HepG2 (cell line): ENCODE measurements at regions of chr6 and their contacts with region 1.

Region 1: DNA sequence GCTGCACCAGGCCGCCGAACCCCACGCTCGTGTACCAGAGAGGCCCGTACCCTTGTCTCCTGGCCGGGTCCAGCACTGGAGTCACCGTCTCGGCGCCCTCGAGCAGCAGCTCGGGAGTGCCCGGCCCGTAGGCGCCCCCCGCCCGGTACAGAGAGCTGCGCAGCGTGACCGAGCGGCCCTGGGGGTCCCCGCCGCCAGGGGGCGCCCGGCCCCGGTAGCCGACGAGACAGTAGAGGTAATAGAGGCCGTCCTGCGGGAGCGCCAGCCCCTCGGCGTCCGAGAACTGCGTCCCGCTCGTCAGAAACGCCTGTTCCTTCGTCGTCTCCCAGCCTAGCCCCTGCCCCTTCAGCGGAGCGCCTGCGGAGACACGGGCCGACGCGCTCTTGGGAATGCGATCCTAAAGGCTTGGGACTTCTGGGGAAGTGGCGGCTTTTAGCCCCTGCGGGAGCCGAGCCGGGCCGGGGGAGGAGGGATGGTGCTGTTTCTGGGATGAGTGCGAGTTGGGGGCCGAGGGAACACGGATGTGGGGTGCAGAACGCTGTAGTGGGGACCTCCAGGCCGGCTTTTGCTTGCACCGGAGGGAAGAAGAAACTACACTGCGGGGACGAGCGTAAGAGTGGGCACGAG is 1.3 kb downstream of the LTB start:
- DNase-seq: peak; percentile 61
- ATAC-seq: peak; percentile 94
- H3K4me3 ChIP-seq: peak overlapping the region; percentile 67 to 88 (median 78)
- H3K27ac ChIP-seq: no peak overlapping the region
- H3K4me1 ChIP-seq: peaks cover 25% of the 10 kb centered on the region
- H3K27me3 ChIP-seq: peaks cover 10 to 65% of the 10 kb centered on the region in 2 experiments; a peak in 4 of 5 replicates
- CTCF ChIP-seq: peak; percentile 95
- EP300 ChIP-seq: no peak
- POLR2A ChIP-seq: peak in 1 of 2 experiments; percentile 53; a peak in 1 of 4 replicates
- RAD21 ChIP-seq: peak; percentile 90

Region 2: GRCh38 chr6:30447237-30447636 is 1133.7 kb before region 1 on chr6:
- CTCF ChIA-PET with region 1: no interaction called
- POLR2A ChIA-PET with region 1: no interaction called
- in situ Hi-C with region 1: no loop called
- intact Hi-C with region 1: loop called (anchors 5 kb)
- DNase-seq: peak; percentile 47
- ATAC-seq: peak; percentile 79
- H3K4me3 ChIP-seq: no peak overlapping the region
- H3K27ac ChIP-seq: no peak overlapping the region
- H3K4me1 ChIP-seq: peaks cover 17% of the 10 kb centered on the region
- H3K27me3 ChIP-seq: peaks cover 17 to 63% of the 10 kb centered on the region in 2 experiments; a peak in 4 of 5 replicates
- CTCF ChIP-seq: peak; percentile 45
- EP300 ChIP-seq: no peak
- POLR2A ChIP-seq: no peak
- RAD21 ChIP-seq: no peak

Region 3: DNA sequence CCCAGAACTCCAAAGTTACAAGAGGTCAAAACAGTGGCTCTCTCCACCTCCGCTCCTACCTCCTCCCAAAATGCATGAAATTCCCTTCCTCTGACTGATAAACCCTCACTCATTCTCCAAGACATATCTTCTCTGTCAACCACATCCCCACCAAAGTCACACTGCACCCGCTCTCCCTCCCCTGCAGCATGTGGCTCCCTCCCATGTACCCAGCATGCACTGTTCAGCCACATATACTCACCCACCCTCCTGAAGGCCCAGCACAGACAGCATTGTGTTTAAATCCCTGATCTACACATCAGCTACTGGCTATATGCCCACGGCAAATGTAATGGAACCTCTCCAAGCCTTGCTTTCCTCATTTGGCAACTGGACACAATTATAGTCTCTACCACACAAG is 404.9 kb before region 1 on chr6:
- CTCF ChIA-PET with region 1: no interaction called
- POLR2A ChIA-PET with region 1: no interaction called
- in situ Hi-C with region 1: no loop called
- intact Hi-C with region 1: no loop called
- DNase-seq: no peak
- ATAC-seq: no peak
- H3K4me3 ChIP-seq: no peak overlapping the region
- H3K27ac ChIP-seq: no peak overlapping the region
- H3K4me1 ChIP-seq: no peaks in the 10 kb centered on the region
- H3K27me3 ChIP-seq: no peaks in the 10 kb centered on the region
- CTCF ChIP-seq: no peak
- EP300 ChIP-seq: no peak
- POLR2A ChIP-seq: no peak
- RAD21 ChIP-seq: no peak

Region 4: DNA sequence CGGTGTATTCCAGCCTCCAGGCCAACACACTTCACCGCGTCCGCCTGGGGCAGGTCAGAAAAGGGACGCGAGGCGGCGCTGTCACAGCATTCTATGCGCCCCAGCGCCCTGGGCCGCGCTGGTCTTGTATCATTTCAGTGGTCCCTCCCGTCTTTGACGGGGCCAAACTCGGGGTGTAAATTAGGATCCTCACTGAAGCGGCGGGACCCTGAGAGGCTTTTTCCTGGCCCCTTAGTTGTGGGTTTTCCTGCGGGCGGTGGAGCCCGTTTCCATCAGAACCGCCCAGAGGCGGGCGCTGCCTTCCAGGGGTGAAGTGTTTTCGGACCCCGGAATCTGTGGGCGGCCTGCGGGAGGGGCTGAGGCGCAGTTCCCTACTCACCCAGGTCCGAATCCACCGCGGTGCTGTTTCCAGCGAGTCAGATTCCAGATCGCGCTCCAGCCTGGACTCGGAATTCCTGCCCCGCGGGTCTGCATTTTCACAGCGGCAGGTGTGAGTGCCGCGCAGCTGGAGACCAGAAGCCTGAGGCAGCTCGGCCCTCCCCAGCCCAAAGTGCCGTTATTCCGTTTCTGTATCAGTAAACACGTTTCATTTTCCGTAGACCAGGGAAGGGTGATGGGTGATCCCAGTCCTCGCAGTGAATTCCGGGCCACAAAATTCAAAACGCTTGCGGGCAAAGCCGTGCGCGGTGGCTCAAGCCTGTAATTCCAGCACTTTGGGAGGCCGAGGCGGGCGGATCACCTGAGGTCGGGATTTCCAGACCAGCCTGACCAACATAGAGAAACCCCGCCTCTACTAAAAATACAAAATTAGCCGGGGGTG is 86.8 kb before region 1 on chr6:
- CTCF ChIA-PET with region 1: no interaction called
- POLR2A ChIA-PET with region 1: no interaction called
- in situ Hi-C with region 1: loop called (anchors 5 kb)
- intact Hi-C with region 1: no loop called
- DNase-seq: peak; percentile 70
- ATAC-seq: peak; percentile 84
- H3K4me3 ChIP-seq: peak overlapping the region; percentile 57 to 80 (median 62)
- H3K27ac ChIP-seq: no peak overlapping the region
- H3K4me1 ChIP-seq: peaks cover 49% of the 10 kb centered on the region
- H3K27me3 ChIP-seq: peaks cover 0 to 20% of the 10 kb centered on the region in 2 experiments; a peak in 2 of 5 replicates
- CTCF ChIP-seq: peak; percentile 97
- EP300 ChIP-seq: no peak
- POLR2A ChIP-seq: no peak
- RAD21 ChIP-seq: peak; percentile 91

Region 5: DNA sequence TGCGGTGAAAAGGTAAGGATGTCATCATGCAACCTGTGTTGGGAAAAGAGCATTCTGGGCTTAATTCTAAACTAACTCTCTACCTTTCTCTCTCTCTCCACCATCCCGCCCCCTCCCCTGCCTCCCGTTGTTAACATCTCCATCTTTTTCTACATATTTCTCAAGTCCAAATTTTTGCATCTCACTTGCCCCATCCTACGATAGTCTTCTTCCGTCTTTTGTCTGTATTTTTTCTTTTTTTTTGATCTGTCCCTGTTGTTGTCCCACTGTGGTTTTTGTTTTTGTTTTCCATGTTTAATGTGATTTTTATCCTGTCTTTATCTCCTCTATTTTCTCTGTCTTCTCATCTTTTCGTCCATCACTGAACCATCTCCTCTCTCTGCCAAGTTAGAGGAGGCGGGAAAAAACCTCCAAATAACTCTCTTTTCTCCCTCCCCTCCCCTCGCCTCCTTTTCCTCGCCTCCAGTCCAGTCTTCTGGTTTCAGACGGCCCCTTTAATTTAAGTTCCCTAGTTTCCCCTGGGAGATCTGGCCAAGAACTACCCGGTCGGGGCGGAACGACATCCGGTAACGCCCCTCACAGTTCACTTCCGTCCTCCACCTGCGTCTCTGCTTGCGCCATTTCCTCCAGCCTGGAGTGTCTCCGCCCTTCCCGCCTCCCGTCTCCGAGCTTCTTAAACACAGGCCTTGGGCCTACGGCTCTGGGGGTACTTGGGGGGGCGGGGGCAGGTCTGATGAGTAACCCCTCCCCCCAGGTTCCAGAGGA is 33.8 kb before region 1 on chr6 and contains the start of gene NFKBIL1:
- CTCF ChIA-PET with region 1: interaction called, 5 read pairs
- POLR2A ChIA-PET with region 1: interaction called, 9 read pairs
- in situ Hi-C with region 1: no loop called
- intact Hi-C with region 1: loop called (anchors 5 kb)
- DNase-seq: peak; percentile 93
- ATAC-seq: peak; percentile 93
- H3K4me3 ChIP-seq: peak within 1 kb of the TSS; percentile 74 to 93 (median 76)
- H3K27ac ChIP-seq: peak within 1 kb of the TSS; percentile 64
- H3K4me1 ChIP-seq: peaks cover 43% of the 10 kb centered on the region
- H3K27me3 ChIP-seq: no peaks in the 10 kb centered on the region; a peak in 1 of 5 replicates
- CTCF ChIP-seq: peak; percentile 36; the same call in 1 of the 2 replicates
- EP300 ChIP-seq: peak in 1 of 2 experiments; percentile 37; a peak in 1 of 4 replicates
- POLR2A ChIP-seq: peak; percentile 37 to 63; a peak in 3 of 4 replicates
- RAD21 ChIP-seq: peak; percentile 12; the same call in 1 of the 2 replicates
- total RNA-seq, gene NFKBIL1: 13.9 and 19.5 TPM in 2 replicates

Region 6: DNA sequence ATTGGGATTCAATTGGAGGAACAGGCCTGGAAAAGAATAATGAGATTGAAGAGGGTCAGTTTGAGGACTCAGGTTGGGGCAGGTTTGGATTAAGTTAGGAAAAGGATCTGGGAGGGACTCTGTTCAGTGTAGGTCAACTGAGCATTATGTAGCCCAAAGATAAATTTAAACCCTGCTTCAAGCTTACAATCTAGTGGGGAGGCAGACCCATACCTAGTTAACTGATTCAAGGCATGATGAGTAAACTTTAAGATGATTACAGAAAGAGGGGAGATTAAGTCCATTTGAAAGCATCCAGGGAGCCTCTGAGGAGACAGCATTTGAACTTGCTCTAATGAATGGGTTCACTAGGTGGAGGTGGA is 20.2 kb before region 1 on chr6:
- CTCF ChIA-PET with region 1: no interaction called
- POLR2A ChIA-PET with region 1: no interaction called
- in situ Hi-C with region 1: no loop called
- intact Hi-C with region 1: loop called (anchors 1 kb)
- DNase-seq: no peak
- ATAC-seq: no peak
- H3K4me3 ChIP-seq: no peak overlapping the region
- H3K27ac ChIP-seq: no peak overlapping the region
- H3K4me1 ChIP-seq: no peaks in the 10 kb centered on the region
- H3K27me3 ChIP-seq: no peaks in the 10 kb centered on the region
- CTCF ChIP-seq: no peak
- EP300 ChIP-seq: no peak
- POLR2A ChIP-seq: no peak
- RAD21 ChIP-seq: no peak

Region 7: DNA sequence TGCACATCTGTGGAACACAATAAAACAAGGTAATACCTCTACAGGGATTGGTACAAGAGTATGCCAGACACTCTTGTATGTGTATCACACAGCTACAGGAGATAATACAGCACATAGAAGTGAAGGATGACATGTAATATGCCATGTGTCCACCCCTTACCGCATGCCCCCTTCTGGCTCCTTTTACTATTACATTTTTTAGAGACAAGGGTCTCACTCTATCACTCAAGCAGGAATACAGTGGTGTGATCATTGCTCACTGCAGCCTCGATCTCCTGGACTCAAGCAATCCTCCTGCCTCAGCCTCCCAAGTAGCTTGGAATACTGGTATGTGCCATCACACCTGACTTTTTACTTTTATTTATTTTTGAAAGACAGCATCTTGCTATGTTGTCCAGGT is 16.1 kb after region 1 on chr6:
- CTCF ChIA-PET with region 1: interaction called, 35 read pairs
- POLR2A ChIA-PET with region 1: interaction called, 15 read pairs
- in situ Hi-C with region 1: no loop called
- intact Hi-C with region 1: loop called (anchors 1 kb)
- DNase-seq: peak; percentile 61
- ATAC-seq: peak; percentile 68
- H3K4me3 ChIP-seq: no peak overlapping the region
- H3K27ac ChIP-seq: no peak overlapping the region
- H3K4me1 ChIP-seq: peaks cover 19% of the 10 kb centered on the region
- H3K27me3 ChIP-seq: peaks cover 0 to 3% of the 10 kb centered on the region in 2 experiments; a peak in 1 of 5 replicates
- CTCF ChIP-seq: peak; percentile 68
- EP300 ChIP-seq: no peak
- POLR2A ChIP-seq: no peak
- RAD21 ChIP-seq: peak; percentile 45; the same call in 1 of the 2 replicates

Region 8: GRCh38 chr6:32118782-32119628 is 538.1 kb after region 1 on chr6:
- CTCF ChIA-PET with region 1: no interaction called
- POLR2A ChIA-PET with region 1: no interaction called
- in situ Hi-C with region 1: no loop called
- intact Hi-C with region 1: no loop called
- DNase-seq: peak; percentile 84
- ATAC-seq: peak; percentile 93
- H3K4me3 ChIP-seq: peak overlapping the region; percentile 45 to 59 (median 56); a peak in 5 of 6 replicates
- H3K27ac ChIP-seq: peak overlapping the region; percentile 87
- H3K4me1 ChIP-seq: peaks cover 24% of the 10 kb centered on the region
- H3K27me3 ChIP-seq: no peaks in the 10 kb centered on the region
- CTCF ChIP-seq: peak; percentile 95
- EP300 ChIP-seq: no peak
- POLR2A ChIP-seq: peak in 1 of 2 experiments; percentile 63; a peak in 3 of 4 replicates
- RAD21 ChIP-seq: peak; percentile 97